ENCODE measurements at regions of chr7 and their contacts with region 1.

Region 1: GRCh38 chr7:80604436-80604835 is 34.0 kb upstream of the CD36 start:
- DNase-seq: no peak
- ATAC-seq: peak; percentile 83

Region 2: DNA sequence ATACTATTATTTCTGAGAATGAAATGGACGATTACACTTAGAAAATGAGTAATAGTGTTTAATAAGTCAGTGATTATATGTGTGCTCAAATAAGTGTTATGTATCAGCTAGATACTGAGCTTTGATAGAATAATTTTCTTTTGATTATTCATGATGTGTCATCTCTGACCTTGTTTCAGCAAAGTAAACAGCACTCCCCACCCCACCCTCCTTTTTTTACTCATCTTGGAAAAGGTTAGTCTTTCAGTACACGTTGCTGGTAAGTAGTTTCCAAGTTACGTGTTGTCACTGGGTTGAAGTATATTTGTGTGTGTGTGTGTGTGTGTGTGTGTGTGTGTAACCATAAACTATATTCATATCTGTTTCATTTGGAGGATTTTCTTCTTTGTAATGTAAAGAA is 385.7 kb before region 1 on chr7:
- intact Hi-C with region 1: no loop called
- DNase-seq: no peak
- ATAC-seq: no peak

Region 3: GRCh38 chr7:80481200-80481884 is 123.1 kb before region 1 on chr7:
- intact Hi-C with region 1: loop called (anchors 10 kb)
- DNase-seq: no peak
- ATAC-seq: no peak

Region 4: GRCh38 chr7:80540836-80541235 is 63.6 kb before region 1 on chr7:
- intact Hi-C with region 1: no loop called
- DNase-seq: no peak
- ATAC-seq: no peak

Region 5: GRCh38 chr7:80552304-80552703 is 52.1 kb before region 1 on chr7:
- intact Hi-C with region 1: no loop called
- DNase-seq: no peak
- ATAC-seq: no peak

Region 6: DNA sequence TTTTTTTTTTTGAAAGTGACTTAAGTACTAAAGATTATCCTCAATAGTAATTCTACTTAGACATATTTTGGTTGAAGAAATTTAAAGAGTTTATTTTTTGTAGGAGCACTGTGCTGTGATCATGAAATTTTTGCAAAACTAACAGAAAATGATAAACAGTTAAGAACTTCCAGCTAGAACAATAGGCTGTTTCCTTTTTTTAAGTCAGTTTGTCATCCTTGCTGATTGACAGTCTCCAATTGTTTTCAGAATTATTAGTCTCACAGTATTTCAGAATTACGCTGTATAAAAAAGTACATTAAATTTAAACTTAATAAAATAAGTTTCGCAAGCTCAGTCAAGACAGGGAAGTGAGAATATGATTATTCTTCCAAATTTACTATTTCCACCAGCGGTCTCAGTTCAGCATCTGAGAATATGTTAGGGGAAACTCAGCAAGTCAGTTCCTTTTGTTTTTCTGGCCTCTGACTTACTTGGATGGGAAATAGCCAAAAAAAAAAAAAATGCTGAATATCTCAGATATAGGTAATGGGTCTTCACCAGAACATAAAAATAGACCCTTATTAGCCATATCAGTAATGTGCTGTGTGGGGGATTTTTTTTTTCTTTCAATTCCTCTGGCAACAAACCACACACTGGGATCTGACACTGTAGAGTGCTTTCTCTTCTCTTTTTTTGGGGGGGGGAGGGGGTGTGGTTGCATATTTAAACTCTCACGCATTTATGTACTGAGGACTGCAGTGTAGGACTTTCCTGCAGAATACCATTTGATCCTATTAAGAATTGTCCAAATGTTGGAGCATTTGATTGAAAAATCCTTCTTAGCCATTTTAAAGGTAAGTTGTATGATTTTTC is 33.7 kb after region 1 on chr7 and contains the start of gene CD36:
- intact Hi-C with region 1: loop called (anchors 5 kb)
- DNase-seq: no peak
- ATAC-seq: peak; percentile 39
- total RNA-seq, gene CD36: 1,239 TPM